Vagina (tissue), 2 donors: ENCODE measurements at regions of chr1 and their contacts with region 1.

Region 1: GRCh38 chr1:226736908-226737818 is 1.9 kb downstream of the ITPKB start:
- DNase-seq: no peak
- H3K4me3 ChIP-seq: peak overlapping the region; percentile 87 to 99
- H3K27ac ChIP-seq: peak overlapping the region; percentile 97
- H3K4me1 ChIP-seq: peaks cover 59% of the 10 kb centered on the region
- H3K27me3 ChIP-seq: no peaks in the 10 kb centered on the region
- CTCF ChIP-seq: no peak
- POLR2A ChIP-seq: peak in 1 of 2 donors; percentile 31

Region 2: DNA sequence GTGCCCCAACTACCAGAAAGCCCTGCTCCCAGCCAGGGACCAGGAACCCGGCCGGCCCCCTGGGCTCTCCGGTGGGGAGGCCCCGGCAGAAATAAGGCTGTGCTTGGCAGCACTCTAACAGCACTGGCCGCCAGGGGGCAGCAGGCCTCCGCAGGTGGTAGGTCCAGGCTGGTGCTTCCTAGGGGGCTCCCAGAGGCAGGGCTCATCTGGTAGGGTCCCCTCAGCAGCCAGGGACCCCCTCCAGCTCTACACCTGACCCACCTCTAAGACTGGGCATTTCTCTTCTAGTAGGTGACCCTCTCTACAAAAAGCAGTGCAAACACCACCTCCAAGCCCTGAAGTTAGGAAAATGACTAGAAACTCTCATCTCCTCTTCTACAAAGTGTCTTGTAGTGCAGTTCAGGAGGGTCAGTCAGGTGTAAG is 103.0 kb before region 1 on chr1:
- intact Hi-C with region 1: loop called (anchors 10 kb)
- DNase-seq: no peak
- H3K4me3 ChIP-seq: no peak overlapping the region
- H3K27ac ChIP-seq: peak overlapping the region; percentile 60
- H3K4me1 ChIP-seq: peaks cover 58% of the 10 kb centered on the region
- H3K27me3 ChIP-seq: no peaks in the 10 kb centered on the region
- CTCF ChIP-seq: peak; percentile 94 to 97 (median 94)
- POLR2A ChIP-seq: no peak

Region 3: GRCh38 chr1:226820941-226821718 is 84.0 kb after region 1 on chr1:
- intact Hi-C with region 1: loop called (anchors 2 kb)
- DNase-seq: peak in 1 of 2 donors; percentile 99
- H3K4me3 ChIP-seq: no peak overlapping the region
- H3K27ac ChIP-seq: peak overlapping the region; percentile 88
- H3K4me1 ChIP-seq: peaks cover 44% of the 10 kb centered on the region
- H3K27me3 ChIP-seq: no peaks in the 10 kb centered on the region
- CTCF ChIP-seq: no peak
- POLR2A ChIP-seq: no peak